Activated naive CD4-positive, alpha-beta T cell treated with anti-CD3 and anti-CD28 coated beads for 36 hours (primary cell): ENCODE measurements at regions of chr2 and their contacts with region 1.

Region 1: DNA sequence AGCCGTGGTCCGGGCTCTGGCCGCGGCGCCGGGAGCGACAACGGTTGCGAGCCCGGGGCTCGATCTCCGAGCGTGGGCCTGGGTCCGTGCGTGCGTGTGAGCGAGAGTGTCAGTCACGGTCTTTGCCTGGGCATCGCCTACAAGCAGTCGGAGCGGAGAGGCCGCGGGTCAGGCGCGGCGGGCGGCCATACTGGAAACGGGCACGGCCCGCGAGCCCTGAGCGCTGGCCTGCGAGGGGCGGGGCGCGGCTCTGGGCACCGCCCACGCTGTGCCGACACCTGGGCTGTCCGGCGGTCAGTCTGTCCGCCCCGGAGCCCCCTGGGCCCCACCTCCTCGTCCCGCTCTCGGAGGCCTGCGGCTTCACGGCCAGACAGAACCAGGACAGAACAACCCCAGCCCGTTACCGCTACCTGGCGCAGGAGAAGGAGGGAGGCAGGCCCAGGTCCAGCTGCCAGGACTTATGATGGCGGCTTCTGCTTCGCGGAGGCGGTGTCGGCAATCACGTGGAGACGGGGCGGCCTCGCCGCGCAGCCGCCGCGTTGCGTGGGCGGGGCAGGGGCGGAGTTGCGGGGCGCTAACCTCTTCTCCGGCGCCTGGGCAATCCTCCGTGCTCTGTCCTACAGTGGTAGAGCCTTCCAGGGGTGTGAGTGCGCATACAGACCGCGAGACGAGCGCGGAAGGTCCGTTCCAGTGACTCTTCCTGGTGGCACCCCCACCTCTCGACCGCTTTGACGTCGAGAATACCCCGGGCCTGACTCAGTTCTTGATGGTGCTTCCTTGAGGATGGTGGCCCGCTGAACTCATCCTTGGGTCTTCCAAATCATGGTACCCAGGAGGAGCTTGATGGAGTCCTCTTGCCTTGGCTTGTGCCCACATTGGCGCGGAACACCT is at the start of gene TMEM131:
- DNase-seq: peak; percentile 96
- H3K4me3 Mint-ChIP-seq: peak within 1 kb of the TSS; percentile 95
- H3K27ac Mint-ChIP-seq: peak within 1 kb of the TSS; percentile 93
- H3K4me1 Mint-ChIP-seq: peaks cover 32% of the 10 kb centered on the region
- H3K27me3 Mint-ChIP-seq: no peaks in the 10 kb centered on the region
- total RNA-seq, gene TMEM131: 18.5 to 19.2 TPM

Region 2: DNA sequence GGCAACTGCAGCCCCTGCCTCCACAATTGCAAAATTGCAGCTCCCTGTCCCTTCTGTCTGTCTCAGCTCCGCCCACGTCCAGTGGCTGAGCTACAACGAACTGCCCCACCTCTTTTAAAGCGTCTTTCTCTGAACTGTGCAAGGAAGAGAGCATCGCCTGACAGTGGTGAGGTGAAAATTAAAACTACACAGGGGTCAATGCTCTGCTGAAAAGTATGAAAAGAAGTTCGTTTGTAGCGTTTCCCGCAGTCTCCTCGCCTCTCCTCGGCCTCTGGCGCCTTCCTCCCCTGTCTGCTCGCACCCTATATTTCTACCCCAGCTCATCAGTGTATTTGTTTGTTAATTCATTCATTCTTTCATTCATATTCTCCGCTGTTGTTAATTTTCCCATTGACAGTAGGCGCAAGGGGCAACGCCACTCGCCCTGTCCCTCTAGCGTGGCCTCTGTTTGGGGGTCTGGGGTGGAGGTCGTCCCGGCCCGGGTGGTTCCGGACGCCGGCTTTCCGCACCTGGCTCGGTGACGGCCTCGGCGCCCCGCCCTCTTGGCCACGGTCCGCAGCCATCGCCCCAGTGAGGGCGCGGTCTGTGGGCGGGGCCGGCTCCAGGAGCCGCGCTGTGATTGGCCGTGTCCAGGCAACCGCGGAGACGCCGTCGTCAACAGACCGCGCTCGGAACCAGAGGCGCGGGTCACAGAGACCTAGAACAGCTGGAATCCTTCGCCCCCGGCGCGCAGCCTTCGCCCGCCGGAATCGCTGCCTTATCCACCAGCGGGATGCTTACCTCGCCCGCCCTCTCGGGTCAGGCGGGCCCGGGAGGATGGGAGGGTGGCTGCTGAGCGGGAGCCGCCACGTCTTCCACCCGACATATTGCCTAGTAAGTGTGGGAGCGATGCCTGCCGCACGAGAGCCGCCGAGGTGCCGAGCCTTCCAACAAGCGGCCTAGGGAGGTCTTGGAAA is 90.8 kb after region 1 on chr2 and contains the start of gene VWA3B:
- CTCF ChIA-PET with region 1: no interaction called
- intact Hi-C with region 1: loop called (anchors 5 kb)
- DNase-seq: peak; percentile 46
- H3K4me3 Mint-ChIP-seq: peak within 1 kb of the TSS; percentile 59
- H3K27ac Mint-ChIP-seq: peak within 1 kb of the TSS; percentile 28
- H3K4me1 Mint-ChIP-seq: peaks cover 32% of the 10 kb centered on the region
- H3K27me3 Mint-ChIP-seq: peaks cover 39% of the 10 kb centered on the region
- total RNA-seq, gene VWA3B: 0.43 TPM in 1 of 2 experiments, not detected in the other